Ovary (tissue), 10 donors: ENCODE measurements at regions of chrX and their contacts with region 1.

Region 1: GRCh38 chrX:144293229-144293628 is 409.4 kb downstream of the UBE2NL start:
- DNase-seq: no peak
- H3K4me3 ChIP-seq: no peak overlapping the region
- H3K27ac ChIP-seq: no peak overlapping the region
- H3K4me1 ChIP-seq: no peaks in the 10 kb centered on the region
- H3K27me3 ChIP-seq: no peaks in the 10 kb centered on the region
- CTCF ChIP-seq: no peak
- EP300 ChIP-seq: no peak
- POLR2A ChIP-seq: no peak

Region 2: DNA sequence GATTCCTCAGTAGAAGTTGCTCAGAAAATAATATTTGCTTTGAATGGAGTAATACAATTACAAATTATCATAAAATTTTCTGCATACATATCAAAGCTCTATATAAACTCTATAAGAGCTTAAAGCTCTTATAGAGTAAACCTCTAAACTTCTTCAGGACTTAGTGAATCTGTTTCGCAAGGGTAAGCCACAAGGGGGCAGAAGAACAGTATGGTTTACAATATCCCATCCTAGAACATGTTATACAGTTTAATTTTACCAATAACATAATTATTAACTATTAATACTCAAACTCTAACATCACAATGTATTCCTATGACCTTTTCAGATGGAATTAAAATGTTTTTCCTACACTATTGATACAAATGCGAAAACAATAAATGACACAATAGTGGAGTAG is 920.3 kb after region 1 on chrX:
- intact Hi-C with region 1: loop called in 1 of 4 experiments (anchors 10 kb)
- DNase-seq: no peak
- H3K4me3 ChIP-seq: no peak overlapping the region
- H3K27ac ChIP-seq: no peak overlapping the region
- H3K4me1 ChIP-seq: no peaks in the 10 kb centered on the region
- H3K27me3 ChIP-seq: no peaks in the 10 kb centered on the region
- CTCF ChIP-seq: no peak
- EP300 ChIP-seq: no peak
- POLR2A ChIP-seq: no peak